ENCODE measurements at regions of chr13 and their contacts with region 1.

Region 1: DNA sequence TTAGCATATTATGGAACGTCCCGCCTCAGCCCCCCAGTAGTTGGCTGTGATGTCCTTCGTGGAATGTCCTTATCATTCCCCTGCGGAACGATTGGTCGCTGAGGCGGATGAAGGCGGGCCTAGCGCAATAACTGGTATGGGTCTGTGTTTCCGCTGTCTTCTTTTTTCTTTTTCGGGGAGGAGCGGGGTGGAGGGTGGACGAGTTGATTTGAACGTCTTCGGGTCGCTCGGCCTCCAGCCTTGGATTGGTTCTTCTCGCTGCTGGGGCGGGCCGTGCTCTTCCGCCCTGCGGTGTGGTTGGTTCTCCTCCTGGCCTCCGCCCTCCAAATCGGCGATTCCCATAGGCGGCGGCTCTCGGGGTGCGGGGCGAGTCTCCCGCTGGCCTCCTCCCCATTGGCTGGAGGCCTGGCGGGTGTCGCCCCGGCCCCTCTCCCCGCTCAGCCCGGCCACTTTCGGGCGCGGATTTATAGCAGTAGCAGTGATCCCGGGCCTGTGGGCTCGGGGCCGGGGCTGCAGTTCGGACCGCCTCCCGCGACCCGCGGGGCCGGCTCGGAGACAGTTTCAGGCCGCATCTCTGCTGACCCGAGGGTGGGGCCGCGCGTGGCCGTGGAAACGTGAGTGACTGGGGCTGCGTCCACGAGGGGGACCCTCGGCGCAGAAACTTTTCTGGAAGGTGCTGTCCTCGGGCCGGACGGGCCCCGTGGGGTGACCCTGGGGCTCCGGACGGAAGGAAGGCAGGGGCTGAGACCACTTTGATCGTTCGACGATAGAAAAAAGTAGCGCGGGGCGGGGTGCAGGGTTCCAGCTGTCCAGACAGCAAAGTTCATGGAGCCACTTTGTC is 2.1 kb downstream of the ING1 start:
- DNase-seq: peak; percentile 99
- ATAC-seq: peak; percentile 74
- H3K4me3 ChIP-seq: peak overlapping the region; percentile 95
- H3K27ac ChIP-seq: peak overlapping the region; percentile 91
- H3K4me1 ChIP-seq: peaks cover 5% of the 10 kb centered on the region
- H3K27me3 ChIP-seq: no peaks in the 10 kb centered on the region
- CTCF ChIP-seq: peak; percentile 11 to 19 (median 14); a peak in 2 of 6 replicates
- EP300 ChIP-seq: no peak
- POLR2A ChIP-seq: no peak; the same call in 1 of the 2 replicates
- RAD21 ChIP-seq: no peak

Region 2: GRCh38 chr13:110283736-110284517 is 431.7 kb before region 1 on chr13:
- CTCF ChIA-PET with region 1: no interaction called
- POLR2A ChIA-PET with region 1: no interaction called
- RAD21 ChIA-PET with region 1: no interaction called
- SMC1A ChIA-PET with region 1: no interaction called
- in situ Hi-C with region 1: no loop called
- intact Hi-C with region 1: no loop called
- DNase-seq: no peak
- ATAC-seq: no peak
- H3K4me3 ChIP-seq: no peak overlapping the region
- H3K27ac ChIP-seq: no peak overlapping the region
- H3K4me1 ChIP-seq: no peaks in the 10 kb centered on the region
- H3K27me3 ChIP-seq: no peaks in the 10 kb centered on the region; a peak in 2 of 4 replicates
- CTCF ChIP-seq: no peak
- EP300 ChIP-seq: no peak
- POLR2A ChIP-seq: no peak
- RAD21 ChIP-seq: no peak

Region 3: GRCh38 chr13:110471833-110472162 is 243.8 kb before region 1 on chr13:
- CTCF ChIA-PET with region 1: no interaction called
- POLR2A ChIA-PET with region 1: no interaction called
- RAD21 ChIA-PET with region 1: no interaction called
- SMC1A ChIA-PET with region 1: no interaction called
- in situ Hi-C with region 1: no loop called
- intact Hi-C with region 1: loop called (anchors 5 kb)
- DNase-seq: peak; percentile 87
- ATAC-seq: peak; percentile 96
- H3K4me3 ChIP-seq: peak overlapping the region; percentile 42; the same call in 1 of the 2 replicates
- H3K27ac ChIP-seq: peak overlapping the region; percentile 60
- H3K4me1 ChIP-seq: peaks cover 37% of the 10 kb centered on the region
- H3K27me3 ChIP-seq: no peaks in the 10 kb centered on the region
- CTCF ChIP-seq: no peak
- EP300 ChIP-seq: peak; percentile 100
- POLR2A ChIP-seq: peak; percentile 68
- RAD21 ChIP-seq: peak; percentile 3; the same call in 1 of the 2 replicates

Region 4: GRCh38 chr13:110615322-110616102 is 100.1 kb before region 1 on chr13 and contains the start of gene NAXD:
- CTCF ChIA-PET with region 1: interaction called, 4 read pairs
- POLR2A ChIA-PET with region 1: interaction called, 16 read pairs
- RAD21 ChIA-PET with region 1: interaction called, 17 read pairs
- SMC1A ChIA-PET with region 1: interaction called, 7 read pairs
- in situ Hi-C with region 1: no loop called
- intact Hi-C with region 1: loop called (anchors 1 kb)
- DNase-seq: peak; percentile 62
- ATAC-seq: peak; percentile 87
- H3K4me3 ChIP-seq: peak within 1 kb of the TSS; percentile 63
- H3K27ac ChIP-seq: peak within 1 kb of the TSS; percentile 86
- H3K4me1 ChIP-seq: peaks cover 20% of the 10 kb centered on the region
- H3K27me3 ChIP-seq: no peaks in the 10 kb centered on the region
- CTCF ChIP-seq: no peak
- EP300 ChIP-seq: no peak
- POLR2A ChIP-seq: peak; percentile 83
- RAD21 ChIP-seq: no peak
- polyA plus RNA-seq, gene NAXD: 1.5 to 5.0 TPM

Region 5: GRCh38 chr13:110726726-110727125 is 11.1 kb after region 1 on chr13:
- CTCF ChIA-PET with region 1: interaction called, 3 read pairs
- POLR2A ChIA-PET with region 1: interaction called, 25 read pairs
- RAD21 ChIA-PET with region 1: interaction called, 4 read pairs
- SMC1A ChIA-PET with region 1: interaction called, 21 read pairs
- in situ Hi-C with region 1: no loop called
- intact Hi-C with region 1: no loop called
- DNase-seq: no peak
- ATAC-seq: peak; percentile 88
- H3K4me3 ChIP-seq: no peak overlapping the region
- H3K27ac ChIP-seq: peak overlapping the region; percentile 53
- H3K4me1 ChIP-seq: peaks cover 7% of the 10 kb centered on the region; the same call in 1 of the 2 replicates
- H3K27me3 ChIP-seq: no peaks in the 10 kb centered on the region
- CTCF ChIP-seq: no peak
- EP300 ChIP-seq: no peak
- POLR2A ChIP-seq: no peak; the same call in 1 of the 2 replicates
- RAD21 ChIP-seq: no peak

Region 6: DNA sequence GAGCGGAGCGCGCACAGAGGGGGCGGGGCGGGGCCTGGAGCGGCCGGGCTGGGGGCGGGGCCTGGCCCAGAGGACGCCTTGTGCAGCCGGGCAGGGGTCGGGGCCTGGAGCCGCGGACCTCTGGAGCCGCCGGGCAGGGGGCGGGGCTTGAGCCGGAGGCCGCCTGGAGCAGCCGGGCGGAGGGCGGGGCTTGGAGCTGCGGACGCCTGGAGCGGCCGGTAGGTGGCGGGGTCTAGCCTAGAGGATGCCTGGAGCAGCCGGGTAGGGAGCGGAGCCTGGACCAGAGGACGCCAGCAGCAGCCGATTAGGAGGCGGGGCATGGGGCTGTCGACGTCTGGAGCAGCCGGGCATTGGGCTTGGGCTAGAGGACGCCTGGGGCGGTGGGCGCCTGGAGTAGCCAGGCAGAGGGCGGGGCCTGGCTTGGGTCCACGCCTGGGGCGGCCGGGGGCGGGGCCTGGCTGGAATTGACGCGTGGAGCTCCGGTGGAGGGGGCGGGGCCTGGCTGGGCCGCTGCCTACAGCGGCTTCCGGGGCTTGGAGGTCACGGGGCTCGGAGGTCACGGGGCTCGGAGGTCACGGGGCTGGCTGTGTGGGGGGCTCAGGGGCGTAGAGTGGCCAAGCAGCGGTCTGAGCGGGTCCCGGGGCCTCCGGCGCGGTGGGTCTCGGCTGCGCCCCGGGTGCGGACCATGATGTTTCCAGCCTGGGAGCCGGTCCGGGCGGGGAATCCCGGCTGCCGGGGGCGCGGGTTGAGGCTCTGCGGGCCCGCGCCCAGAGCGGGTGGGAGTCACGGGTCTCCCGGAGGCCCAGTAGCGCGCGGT is 199.7 kb after region 1 on chr13 and contains the start of gene ANKRD10:
- CTCF ChIA-PET with region 1: interaction called, 5 read pairs
- POLR2A ChIA-PET with region 1: interaction called, 8 read pairs
- RAD21 ChIA-PET with region 1: interaction called, 3 read pairs
- SMC1A ChIA-PET with region 1: interaction called, 3 read pairs
- in situ Hi-C with region 1: no loop called
- intact Hi-C with region 1: loop called (anchors 2 kb)
- DNase-seq: peak; percentile 82
- ATAC-seq: peak; percentile 84
- H3K4me3 ChIP-seq: peak within 1 kb of the TSS; percentile 93
- H3K27ac ChIP-seq: peak within 1 kb of the TSS; percentile 91
- H3K4me1 ChIP-seq: peaks cover 23% of the 10 kb centered on the region
- H3K27me3 ChIP-seq: no peaks in the 10 kb centered on the region
- CTCF ChIP-seq: peak; percentile 67 to 86 (median 84)
- EP300 ChIP-seq: no peak
- POLR2A ChIP-seq: peak; percentile 80
- RAD21 ChIP-seq: peak; percentile 65
- polyA plus RNA-seq, gene ANKRD10: 47.1 to 62.3 TPM

Measured in GM12878 (cell line).